T-cell (primary cell): ENCODE measurements at regions of chr2 and their contacts with region 1.

Region 1: DNA sequence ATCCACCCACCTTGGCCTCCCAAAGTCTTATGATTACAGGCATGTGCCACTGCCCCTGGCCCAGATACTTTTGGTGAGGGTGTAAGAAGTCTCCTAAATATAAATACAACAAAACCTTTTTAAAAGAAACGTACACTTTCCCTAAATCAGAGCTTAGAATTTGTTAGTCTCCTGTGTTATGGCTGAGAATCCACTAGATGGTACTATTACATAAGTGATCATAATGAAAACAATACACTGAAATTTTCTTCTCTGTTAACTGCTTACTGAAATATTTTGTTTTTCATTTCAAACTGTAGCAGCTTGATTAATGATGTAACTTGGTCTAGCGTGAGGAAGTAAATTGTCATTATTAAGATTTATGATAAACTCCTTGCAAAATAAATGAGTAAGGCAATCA is 74.8 kb upstream of the FAM98A start:
- DNase-seq: no peak
- ATAC-seq: no peak
- H3K4me3 ChIP-seq: no peak overlapping the region
- H3K4me3 Mint-ChIP-seq: no peak overlapping the region
- H3K27ac ChIP-seq: no peak overlapping the region
- H3K27ac Mint-ChIP-seq: no peak overlapping the region
- H3K4me1 ChIP-seq: no peaks in the 10 kb centered on the region
- H3K4me1 Mint-ChIP-seq: no peaks in the 10 kb centered on the region
- H3K27me3 ChIP-seq: no peaks in the 10 kb centered on the region
- H3K27me3 Mint-ChIP-seq: peaks cover 5 to 20% of the 10 kb centered on the region in 2 donors

Region 2: DNA sequence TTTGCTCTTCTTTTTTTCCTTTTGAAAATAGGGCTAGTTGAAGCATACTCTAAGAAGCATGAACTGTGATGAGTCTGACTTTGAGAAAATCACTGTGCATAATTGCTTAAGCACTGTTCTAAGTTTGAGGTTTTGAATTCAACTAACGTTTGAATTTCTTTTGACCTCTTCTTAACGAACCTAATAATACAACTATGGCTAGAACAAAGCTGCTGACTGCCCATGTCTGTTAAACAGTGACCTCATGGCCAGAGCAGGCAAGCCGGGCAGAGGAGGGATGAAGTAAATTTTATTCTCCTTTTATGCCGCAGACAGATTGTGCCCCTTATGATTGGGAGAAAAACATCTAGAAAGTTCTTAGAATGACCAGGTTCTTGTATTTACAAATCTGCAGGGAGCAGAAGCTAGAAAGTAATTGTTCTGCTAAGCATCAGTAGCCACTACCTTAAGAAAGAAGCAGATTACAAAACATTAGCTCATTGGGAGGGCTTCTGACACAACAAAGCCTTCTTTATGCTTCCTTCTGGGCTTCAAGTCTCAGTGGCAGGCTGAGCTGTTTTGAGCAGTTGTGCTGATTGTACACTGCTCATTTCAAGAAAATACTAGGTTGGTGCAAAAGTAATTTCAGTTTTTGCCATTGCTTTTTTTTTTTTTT is 295.3 kb before region 1 on chr2:
- CTCF ChIA-PET with region 1: interaction called in 1 of 2 experiments, 11 read pairs
- POLR2A ChIA-PET with region 1: no interaction called
- DNase-seq: no peak
- ATAC-seq: no peak
- H3K4me3 ChIP-seq: no peak overlapping the region
- H3K4me3 Mint-ChIP-seq: no peak overlapping the region
- H3K27ac ChIP-seq: no peak overlapping the region
- H3K27ac Mint-ChIP-seq: no peak overlapping the region
- H3K4me1 ChIP-seq: no peaks in the 10 kb centered on the region
- H3K4me1 Mint-ChIP-seq: peaks cover 0 to 5% (median 0%) of the 10 kb centered on the region in 3 donors
- H3K27me3 ChIP-seq: peaks cover 0 to 4% of the 10 kb centered on the region in 2 experiments
- H3K27me3 Mint-ChIP-seq: peaks cover 0 to 3% of the 10 kb centered on the region in 2 donors

Region 3: DNA sequence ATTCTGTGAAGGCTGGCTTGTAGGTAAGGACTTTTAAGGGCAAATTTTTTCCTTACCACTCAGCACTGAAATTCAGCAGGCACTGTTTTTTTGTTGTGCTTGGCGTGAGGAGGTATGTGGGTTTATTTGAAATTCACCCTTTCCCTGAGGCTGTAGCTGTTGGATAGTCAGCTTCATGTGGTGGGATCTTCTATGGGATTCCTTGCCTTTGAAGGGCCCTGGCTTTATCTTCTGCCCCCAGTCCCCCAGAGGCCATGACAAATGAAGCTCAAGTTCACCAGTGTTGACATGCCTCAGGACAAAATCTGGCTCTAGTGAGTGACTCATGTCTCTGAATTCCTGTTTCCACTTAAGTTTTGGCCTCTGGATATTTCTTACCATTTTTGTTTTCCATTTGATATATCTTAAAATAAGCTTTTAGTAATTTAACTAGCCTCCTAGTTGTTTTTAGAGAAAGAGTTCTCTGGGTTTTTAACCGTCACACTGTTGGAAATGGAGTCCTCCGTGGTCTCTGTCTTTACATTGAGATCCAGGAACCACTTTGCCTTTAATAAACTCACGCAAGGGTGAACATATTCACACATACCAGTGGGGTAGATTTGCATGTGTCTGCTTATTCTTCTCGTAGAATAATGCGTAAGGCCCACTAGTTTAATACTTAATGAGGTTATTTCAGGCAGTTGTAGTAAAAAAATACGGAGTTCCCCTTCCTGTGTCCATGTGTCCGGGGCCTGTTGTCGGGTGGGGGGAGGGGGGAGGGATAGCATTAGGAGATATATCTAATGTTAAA is 136.3 kb after region 1 on chr2:
- CTCF ChIA-PET with region 1: no interaction called
- POLR2A ChIA-PET with region 1: no interaction called
- DNase-seq: no peak
- ATAC-seq: no peak
- H3K4me3 ChIP-seq: no peak overlapping the region
- H3K4me3 Mint-ChIP-seq: no peak overlapping the region
- H3K27ac ChIP-seq: no peak overlapping the region
- H3K27ac Mint-ChIP-seq: no peak overlapping the region
- H3K4me1 ChIP-seq: no peaks in the 10 kb centered on the region
- H3K4me1 Mint-ChIP-seq: no peaks in the 10 kb centered on the region
- H3K27me3 ChIP-seq: no peaks in the 10 kb centered on the region
- H3K27me3 Mint-ChIP-seq: peaks cover 0 to 3% of the 10 kb centered on the region in 2 donors